ENCODE measurements at regions of chr16 and their contacts with region 1.

Region 1: GRCh38 chr16:88194397-88195268 is 188.1 kb upstream of the ZNF469 start:
- DNase-seq: no peak
- CTCF ChIP-seq: no peak

Region 2: GRCh38 chr16:88569985-88570690 is 375.5 kb after region 1 on chr16 and contains the start of gene ZC3H18:
- in situ Hi-C with region 1: loop called (anchors 25 kb)
- DNase-seq: peak; percentile 100
- CTCF ChIP-seq: no peak

Region 3: DNA sequence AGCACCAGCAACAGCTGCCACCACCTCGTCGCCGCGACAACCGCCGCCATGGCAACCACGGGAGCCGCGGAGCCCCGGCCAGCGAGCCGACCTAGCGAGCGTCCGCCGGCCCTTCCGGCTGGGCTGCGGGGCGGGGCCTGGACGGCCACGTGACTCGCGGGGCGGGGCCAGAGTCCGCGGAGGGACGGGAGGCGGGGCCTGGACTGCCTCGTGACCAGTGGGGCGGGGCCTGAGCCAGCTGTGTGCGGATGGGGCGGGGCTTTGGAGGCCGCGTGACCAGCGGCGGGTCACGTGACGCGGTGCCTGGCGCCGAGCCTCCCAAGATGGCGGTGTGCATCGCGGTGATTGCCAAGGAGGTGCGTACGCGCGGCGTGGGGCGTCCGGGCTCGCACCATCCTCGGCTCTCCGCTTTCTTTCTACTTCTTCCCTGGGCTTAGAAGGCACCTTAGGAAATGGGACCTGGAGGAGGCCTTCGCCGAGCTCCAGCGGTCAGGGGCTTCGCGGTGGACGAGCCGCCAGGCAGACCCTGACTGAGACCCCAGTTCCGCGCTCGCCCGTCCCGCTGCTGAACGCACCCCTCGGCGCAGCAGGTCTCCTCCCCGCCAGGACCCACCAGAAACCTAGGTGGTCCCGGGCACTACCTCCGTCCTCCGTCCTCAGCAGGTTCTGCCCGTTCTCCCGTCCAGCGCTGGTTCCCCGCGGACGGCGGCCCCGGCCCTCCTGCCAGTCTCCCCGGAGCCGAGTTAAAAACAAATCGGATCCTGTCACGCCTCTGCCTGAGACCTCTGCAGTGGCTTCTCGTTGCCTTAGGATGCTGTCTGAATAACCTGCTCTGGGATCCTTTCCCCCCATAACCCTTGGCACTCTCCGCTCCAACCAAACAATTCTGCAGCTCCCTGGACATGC is 662.4 kb after region 1 on chr16 and contains the starts of genes GALNS and TRAPPC2L:
- in situ Hi-C with region 1: no loop called
- DNase-seq: peak; percentile 100
- CTCF ChIP-seq: no peak

Measured in GM13976 (cell line).